ENCODE measurements at regions of chr3 and their contacts with region 1.

Region 1: GRCh38 chr3:12556671-12557472 is at the start of gene MKRN2:
- DNase-seq: peak; percentile 89
- ATAC-seq: peak; percentile 97 to 98
- total RNA-seq, gene MKRN2: 23.9 to 31.7 TPM

Region 2: GRCh38 chr3:12658593-12659058 is 101.8 kb after region 1 on chr3:
- intact Hi-C with region 1: loop called (anchors 5 to 10 kb)
- DNase-seq: no peak
- ATAC-seq: no peak